Activated CD8-positive, alpha-beta T cell treated with anti-CD3 and anti-CD28 coated beads for 36 hours (primary cell): ENCODE measurements at regions of chr12 and their contacts with region 1.

Region 1: DNA sequence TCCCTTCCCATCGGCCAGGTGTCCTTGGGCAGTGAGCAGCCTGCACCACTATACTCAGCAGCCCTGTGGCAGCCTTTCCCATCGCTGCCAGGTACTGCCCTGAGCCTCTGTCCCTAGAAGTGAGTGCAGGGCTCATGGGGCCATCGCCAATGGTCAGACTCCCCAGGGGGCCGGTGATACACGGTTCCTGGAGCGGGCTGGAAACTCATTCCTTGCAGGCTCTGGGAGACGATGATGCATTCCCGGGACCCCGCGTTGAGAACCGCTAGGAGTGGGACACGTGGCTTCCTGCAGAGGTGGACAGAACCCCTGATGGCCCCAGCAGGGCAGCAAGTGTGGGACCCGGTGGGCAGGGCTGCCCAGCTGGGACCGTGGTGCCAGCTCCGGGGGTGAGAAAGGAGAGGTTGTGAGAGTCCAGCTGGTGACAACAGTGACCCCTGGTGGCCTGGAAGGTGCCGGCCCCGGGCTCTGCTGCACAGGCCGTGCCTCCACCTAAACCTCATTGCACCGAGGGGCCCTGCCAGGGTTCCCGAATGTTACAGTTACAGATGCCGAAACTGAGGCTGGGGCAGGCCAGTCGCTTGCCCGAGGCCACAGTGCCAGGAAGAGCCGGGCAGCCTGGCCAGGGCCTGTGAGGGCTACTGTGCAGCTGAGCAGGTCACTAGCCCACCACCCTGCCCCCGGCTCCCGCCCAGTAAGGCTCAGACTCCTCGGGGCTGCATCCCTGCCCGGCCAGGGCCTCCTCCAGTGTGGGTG is 33.8 kb downstream of the FBRSL1 start:
- DNase-seq: peak; percentile 86
- ATAC-seq: peak; percentile 86
- H3K4me3 Mint-ChIP-seq: no peak overlapping the region
- H3K27ac Mint-ChIP-seq: no peak overlapping the region
- H3K4me1 Mint-ChIP-seq: peaks cover 6% of the 10 kb centered on the region
- H3K27me3 Mint-ChIP-seq: no peaks in the 10 kb centered on the region
- CTCF ChIP-seq: peak; percentile 92

Region 2: DNA sequence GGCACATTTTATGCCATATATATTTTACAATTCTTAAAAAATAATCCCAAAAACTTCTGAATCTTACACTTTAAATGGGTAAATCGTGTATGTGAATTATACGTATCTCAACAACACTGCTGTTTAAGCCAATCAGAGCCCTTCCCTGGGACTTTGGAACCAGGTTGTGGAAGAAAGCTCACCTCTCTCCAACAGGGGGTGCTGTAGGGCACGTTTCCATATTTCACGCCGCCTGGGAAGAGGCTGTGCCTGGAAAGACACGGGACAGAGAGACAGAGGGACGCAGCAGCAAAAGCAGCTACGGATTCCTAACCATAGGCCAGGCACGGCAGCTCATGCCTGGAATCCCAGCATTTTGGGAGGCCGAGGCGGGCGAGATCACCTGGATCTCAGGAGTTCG is 63.2 kb before region 1 on chr12:
- CTCF ChIA-PET with region 1: interaction called, 13 read pairs
- POLR2A ChIA-PET with region 1: no interaction called
- intact Hi-C with region 1: no loop called
- DNase-seq: peak; percentile 40
- ATAC-seq: no peak
- H3K4me3 Mint-ChIP-seq: no peak overlapping the region
- H3K27ac Mint-ChIP-seq: no peak overlapping the region
- H3K4me1 Mint-ChIP-seq: no peaks in the 10 kb centered on the region
- H3K27me3 Mint-ChIP-seq: no peaks in the 10 kb centered on the region
- CTCF ChIP-seq: peak; percentile 64

Region 3: GRCh38 chr12:132513070-132513398 is 10.7 kb before region 1 on chr12:
- CTCF ChIA-PET with region 1: interaction called, 17 read pairs
- POLR2A ChIA-PET with region 1: no interaction called
- intact Hi-C with region 1: no loop called
- DNase-seq: no peak
- ATAC-seq: no peak
- H3K4me3 Mint-ChIP-seq: no peak overlapping the region
- H3K27ac Mint-ChIP-seq: no peak overlapping the region
- H3K4me1 Mint-ChIP-seq: peaks cover under 1% of the 10 kb centered on the region
- H3K27me3 Mint-ChIP-seq: no peaks in the 10 kb centered on the region
- CTCF ChIP-seq: no peak